Posterior cingulate gyrus (tissue), 11 donors: ENCODE measurements at regions of chr3 and their contacts with region 1.

Region 1: GRCh38 chr3:45043728-45044299 is 17.7 kb downstream of the CLEC3B start:
- DNase-seq: no peak

Region 2: DNA sequence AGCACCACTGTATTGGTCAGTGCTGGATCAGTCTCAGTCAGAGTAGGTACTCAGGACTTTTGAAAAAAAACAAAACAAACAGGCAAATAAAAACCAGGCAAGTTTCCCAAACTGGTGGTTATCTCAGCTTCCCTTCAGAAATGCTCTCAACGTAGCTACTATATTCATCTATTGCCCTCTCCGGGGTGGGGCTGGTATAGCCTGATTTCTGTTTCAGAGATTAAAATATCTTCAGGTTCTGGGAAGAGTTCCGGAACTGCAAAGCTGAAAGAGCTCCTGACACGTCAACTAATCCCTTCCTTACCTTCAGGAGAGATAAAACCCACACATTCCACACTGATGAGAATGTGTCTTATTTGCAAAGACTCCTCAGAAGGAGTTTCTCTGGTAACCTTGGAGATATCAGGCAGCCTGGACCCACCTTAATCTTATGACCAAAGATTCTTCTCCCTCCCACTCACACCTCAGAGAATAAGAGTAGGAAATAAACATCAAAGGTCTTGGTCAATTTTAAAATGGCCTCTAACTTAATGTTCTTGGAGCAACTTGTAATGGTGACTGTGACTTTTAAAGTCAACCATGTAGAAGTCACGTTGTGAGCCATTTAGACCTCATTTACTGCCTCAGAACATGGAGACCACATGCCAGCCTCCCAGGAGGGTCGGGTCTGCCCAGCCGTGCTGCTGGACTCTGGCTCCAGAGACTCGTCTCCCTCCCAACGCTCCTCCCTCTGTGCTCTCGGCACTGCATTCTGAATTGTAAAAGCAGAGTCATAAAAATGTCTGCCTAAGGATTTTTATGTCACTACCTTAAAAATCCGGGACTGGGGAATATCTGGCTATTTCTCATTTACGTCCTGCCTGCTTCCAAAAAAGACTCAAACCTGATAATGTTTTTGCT is 48.6 kb after region 1 on chr3:
- intact Hi-C with region 1: no loop called
- DNase-seq: no peak

Region 3: DNA sequence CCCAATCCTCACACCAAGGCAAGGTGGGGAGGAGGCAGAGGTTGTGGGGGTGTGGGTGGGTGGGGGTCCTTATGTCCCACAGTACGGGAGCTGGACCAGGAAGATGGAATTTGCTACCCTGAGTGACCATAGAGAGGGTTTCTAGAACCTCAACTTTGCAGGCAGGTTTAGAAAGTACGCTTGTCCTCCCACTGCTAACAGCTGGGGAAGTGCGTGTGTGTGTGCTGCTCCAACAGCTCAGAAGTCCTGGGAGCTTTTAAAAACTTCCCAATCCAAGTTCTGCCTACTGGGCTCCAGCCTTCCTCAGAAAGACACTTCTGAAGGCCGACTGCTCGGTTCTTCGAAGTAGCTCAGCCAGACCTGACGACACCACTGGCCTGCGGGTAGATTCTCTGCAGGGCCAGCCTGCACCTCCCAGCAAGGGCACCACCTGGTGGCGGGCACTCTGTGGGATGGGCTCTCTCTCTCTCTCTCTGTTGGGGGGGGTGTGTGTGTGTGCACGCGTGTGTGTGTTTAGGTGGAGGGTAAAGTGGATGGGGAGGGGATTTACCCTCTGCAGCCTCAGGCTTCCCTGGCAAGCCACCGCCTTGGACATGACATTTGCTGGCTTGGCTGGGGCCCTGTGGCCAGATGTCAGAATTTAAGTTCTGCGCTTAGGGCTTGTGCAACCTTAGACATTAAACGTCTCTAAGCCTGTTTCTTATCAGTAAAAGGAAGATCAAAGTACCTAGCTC is 166.7 kb after region 1 on chr3:
- intact Hi-C with region 1: loop called (anchors 5 kb)
- DNase-seq: peak; percentile 28 to 94 (median 63)

Region 4: GRCh38 chr3:45224824-45225464 is 181.1 kb after region 1 on chr3:
- intact Hi-C with region 1: loop called (anchors 5 kb)
- DNase-seq: peak; percentile 59 to 96 (median 74)

Region 5: DNA sequence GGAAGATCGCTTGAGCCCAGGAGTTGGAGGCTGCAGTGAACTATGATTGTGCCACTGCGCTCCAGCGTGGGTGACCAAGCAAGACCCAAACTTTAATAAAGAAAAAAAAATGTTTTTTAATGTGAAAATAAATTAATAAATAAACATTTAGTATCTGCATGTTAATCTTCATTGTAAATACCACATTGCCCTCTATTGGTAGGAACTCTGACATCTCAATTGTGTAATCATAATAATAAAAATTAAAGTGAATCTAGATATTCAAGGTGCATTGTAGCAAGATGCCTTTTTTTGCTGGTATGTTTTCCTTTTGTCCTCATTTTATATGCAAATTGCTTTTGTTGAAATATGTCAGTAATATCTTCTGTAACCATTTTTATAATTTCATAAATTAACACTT is 455.7 kb after region 1 on chr3:
- intact Hi-C with region 1: loop called (anchors 2 kb)
- DNase-seq: no peak

Region 6: DNA sequence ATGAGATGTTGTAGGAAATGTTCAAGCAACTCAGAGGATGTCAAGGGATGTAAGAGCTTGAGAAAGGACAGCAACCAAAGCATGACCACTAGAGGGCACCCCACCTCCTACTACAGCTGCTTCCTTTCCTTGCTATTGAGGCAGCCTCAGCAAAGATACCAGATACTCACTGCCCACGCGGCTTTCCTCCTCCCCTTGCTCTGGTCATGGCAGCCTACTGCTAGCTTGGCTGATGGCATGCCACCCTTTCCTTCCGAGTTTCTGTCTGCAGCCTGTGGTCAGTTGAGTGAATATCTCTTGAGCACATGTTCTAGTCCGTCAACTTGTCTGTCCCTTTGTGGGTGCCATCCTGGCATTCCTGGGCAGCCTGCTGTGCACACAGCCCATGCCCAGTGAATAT is 895.0 kb after region 1 on chr3:
- intact Hi-C with region 1: loop called (anchors 5 kb)
- DNase-seq: peak; percentile 71 to 97 (median 88)

Region 7: GRCh38 chr3:46078712-46079400 is 1035.0 kb after region 1 on chr3:
- intact Hi-C with region 1: loop called (anchors 5 kb)
- DNase-seq: peak in 9 of 10 donors; percentile 35 to 95 (median 86)